Sciatic nerve (tissue), 2 donors: ENCODE measurements at regions of chr11 and their contacts with region 1.

Region 1: GRCh38 chr11:36746886-36747710 is 149.1 kb upstream of the RAG2 start:
- DNase-seq: peak; percentile 86
- ATAC-seq: peak; percentile 93

Region 2: DNA sequence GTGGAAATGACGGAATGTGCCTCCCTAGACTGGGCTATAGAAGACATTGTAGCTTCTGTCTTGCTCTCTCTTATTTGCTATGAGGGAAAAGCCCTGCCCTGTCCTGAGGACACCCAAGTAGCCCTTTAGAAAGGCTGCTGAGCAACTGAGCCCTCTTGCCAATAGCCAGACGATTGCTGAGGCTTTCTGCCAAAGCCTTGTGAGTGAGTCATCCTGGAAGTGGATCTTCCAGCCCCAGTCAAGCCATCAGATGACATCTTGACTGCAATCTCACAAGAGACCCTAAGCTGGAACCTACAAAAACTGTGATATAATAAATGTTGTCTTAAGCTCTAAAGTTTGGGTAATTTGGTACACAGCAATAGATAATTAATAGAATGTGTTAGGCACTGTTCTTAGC is 233.1 kb before region 1 on chr11:
- intact Hi-C with region 1: no loop called
- DNase-seq: no peak
- ATAC-seq: no peak

Region 3: DNA sequence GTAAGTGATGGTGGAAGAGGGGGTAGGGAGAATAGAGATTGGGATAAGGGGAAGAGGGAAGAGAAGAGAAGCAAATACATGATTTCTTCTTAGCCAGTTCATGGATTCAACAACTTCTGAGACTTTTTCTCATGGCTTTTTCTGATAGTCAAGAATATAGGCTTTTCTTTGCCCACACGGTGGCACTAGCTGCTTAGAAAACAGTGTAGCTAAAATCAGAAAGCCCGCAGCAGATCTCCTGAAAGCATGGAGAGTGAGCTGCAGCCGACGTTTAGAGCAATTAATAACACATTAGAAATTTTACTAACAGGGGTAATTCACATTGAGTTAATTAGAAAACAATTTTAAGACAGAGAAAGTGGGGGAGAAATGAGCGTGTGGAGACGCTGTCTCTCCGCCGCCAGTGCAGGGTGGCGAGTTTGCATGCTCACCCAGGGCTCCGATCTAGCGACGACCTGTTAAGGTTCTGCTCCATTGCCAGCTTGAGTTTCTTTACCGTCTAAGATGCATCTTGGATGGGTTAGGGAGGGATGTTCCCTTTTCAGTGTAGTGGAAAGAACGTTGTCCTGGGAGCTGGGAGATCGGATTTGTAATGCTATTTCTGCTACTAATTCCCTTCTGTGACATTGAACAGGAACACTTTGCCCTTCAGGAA is 182.6 kb before region 1 on chr11:
- intact Hi-C with region 1: loop called (anchors 10 kb)
- DNase-seq: peak; percentile 63
- ATAC-seq: peak; percentile 73

Region 4: DNA sequence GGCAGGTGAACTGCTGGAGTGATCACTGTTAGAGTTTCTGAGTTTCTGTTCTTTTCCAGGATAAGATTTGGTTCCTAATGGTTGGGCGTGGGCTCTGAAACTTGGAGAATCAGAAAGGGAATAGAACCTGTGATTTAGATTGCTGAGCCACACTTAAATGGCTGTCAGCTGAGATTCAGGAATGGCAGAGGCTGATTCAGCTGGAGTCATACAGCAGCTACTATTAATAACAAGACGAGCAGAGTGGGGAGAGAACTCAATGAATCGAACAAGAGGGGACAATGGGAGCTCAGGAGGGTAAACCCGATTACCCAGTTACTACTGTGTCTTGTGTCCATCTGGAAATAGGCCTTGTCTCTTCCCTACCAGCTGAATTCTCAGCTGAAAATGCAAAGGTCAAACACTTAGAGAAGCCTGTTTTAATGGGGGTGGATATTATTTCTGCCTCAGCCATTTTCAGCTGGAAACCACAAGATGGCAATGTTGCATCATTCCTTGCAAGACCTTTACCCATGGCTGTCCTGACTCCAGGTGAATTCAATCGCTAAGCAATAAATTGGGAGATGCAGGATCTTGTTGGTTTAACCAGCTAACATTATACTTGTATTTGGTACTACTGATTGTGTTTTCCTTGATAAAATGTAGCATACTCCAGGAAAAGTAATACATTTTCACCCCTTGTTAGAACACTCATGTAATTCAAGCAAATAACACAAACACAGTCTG is 44.6 kb before region 1 on chr11:
- intact Hi-C with region 1: loop called (anchors 5 kb)
- DNase-seq: no peak
- ATAC-seq: peak; percentile 72

Region 5: DNA sequence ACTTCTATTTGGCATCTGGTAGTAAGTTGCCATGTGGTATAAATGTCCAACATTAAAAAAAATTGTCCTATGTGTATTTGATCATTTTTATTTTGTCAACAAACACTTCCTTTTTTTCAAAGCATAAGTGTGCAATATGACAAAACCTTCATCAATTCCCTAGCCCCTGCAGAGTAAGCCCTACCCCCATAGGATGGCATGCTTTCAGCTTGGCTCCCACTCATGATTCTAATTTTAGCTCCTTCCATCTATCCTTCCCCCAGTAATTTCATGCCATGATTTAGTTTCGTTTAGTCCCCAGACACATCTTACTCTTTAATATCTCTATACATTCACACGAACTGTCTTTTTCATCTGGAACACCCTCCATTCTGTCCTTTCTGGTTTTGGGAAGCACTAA is 101.6 kb after region 1 on chr11:
- intact Hi-C with region 1: no loop called
- DNase-seq: no peak
- ATAC-seq: no peak

Region 6: GRCh38 chr11:37087650-37088568 is 340.8 kb after region 1 on chr11:
- intact Hi-C with region 1: no loop called
- DNase-seq: no peak
- ATAC-seq: no peak